H1 (cell line): ENCODE measurements at regions of chr7 and their contacts with region 1.

Region 1: GRCh38 chr7:38318803-38319416 is 45.5 kb upstream of the TARP start:
- DNase-seq: peak in 1 of 2 experiments; percentile 83
- H3K4me3 ChIP-seq: no peak overlapping the region
- H3K27ac ChIP-seq: no peak overlapping the region
- H3K4me1 ChIP-seq: peaks cover 0 to 4% (median under 1%) of the 10 kb centered on the region in 4 experiments; a peak in 2 of 7 replicates
- H3K27me3 ChIP-seq: no peaks in the 10 kb centered on the region
- CTCF ChIP-seq: peak; percentile 30 to 81 (median 72)
- EP300 ChIP-seq: 0 out of 3 replicates have a peak, but pooled peaks of 1 of the 2 experiments have one; percentile 38
- POLR2A ChIP-seq: no peak
- RAD21 ChIP-seq: peak; percentile 83 to 86

Region 2: DNA sequence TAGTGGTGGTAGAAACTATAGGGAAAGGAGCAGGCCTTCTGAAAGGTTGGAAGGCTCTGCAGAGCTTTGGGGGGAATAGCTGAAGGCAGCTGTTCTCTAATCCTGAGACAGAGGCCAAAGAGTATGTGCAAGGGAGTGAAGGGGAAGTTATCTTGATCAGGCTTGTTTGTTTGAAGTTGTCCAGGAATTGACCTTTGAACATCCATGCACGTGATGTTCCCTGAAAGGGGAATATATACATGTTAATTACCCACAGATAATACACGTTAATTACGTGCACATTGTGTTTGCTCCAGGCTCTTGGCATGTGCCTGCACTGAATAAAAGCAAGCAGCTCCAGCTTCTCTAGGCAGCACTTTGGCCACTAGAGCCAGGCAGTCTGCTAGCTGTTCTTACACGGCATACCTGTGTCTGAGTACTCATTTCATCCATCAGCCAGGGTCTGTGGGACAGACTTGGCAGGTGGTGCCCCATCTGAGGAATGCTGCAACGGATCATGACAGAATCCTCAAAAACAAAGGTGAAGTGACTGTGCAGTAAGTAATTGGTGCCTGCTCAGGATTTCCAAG is 158.8 kb before region 1 on chr7:
- CTCF ChIA-PET with region 1: no interaction called
- POLR2A ChIA-PET with region 1: no interaction called
- DNase-seq: no peak
- H3K4me3 ChIP-seq: no peak overlapping the region
- H3K27ac ChIP-seq: no peak overlapping the region
- H3K4me1 ChIP-seq: no peaks in the 10 kb centered on the region
- H3K27me3 ChIP-seq: no peaks in the 10 kb centered on the region
- CTCF ChIP-seq: no peak
- EP300 ChIP-seq: no peak
- POLR2A ChIP-seq: no peak
- RAD21 ChIP-seq: no peak

Region 3: GRCh38 chr7:38178004-38178694 is 140.8 kb before region 1 on chr7 and contains the start of gene STARD3NL:
- CTCF ChIA-PET with region 1: no interaction called
- POLR2A ChIA-PET with region 1: no interaction called
- DNase-seq: peak; percentile 90 to 99
- H3K4me3 ChIP-seq: peak within 1 kb of the TSS; percentile 73 to 94 (median 83)
- H3K27ac ChIP-seq: peak within 1 kb of the TSS; percentile 75
- H3K4me1 ChIP-seq: no peaks in the 10 kb centered on the region; a peak in 1 of 7 replicates
- H3K27me3 ChIP-seq: no peaks in the 10 kb centered on the region
- CTCF ChIP-seq: no peak
- EP300 ChIP-seq: no peak
- POLR2A ChIP-seq: peak; percentile 82 to 85; a peak in 2 of 3 replicates
- RAD21 ChIP-seq: no peak; a peak in 1 of 4 replicates
- total RNA-seq, gene STARD3NL: 33.1 and 40.5 TPM in 2 replicates

Region 4: GRCh38 chr7:38222481-38223096 is 96.3 kb before region 1 on chr7:
- CTCF ChIA-PET with region 1: interaction called, 68 read pairs
- POLR2A ChIA-PET with region 1: no interaction called
- DNase-seq: no peak
- H3K4me3 ChIP-seq: no peak overlapping the region
- H3K27ac ChIP-seq: no peak overlapping the region
- H3K4me1 ChIP-seq: no peaks in the 10 kb centered on the region
- H3K27me3 ChIP-seq: no peaks in the 10 kb centered on the region
- CTCF ChIP-seq: peak in 2 of 3 experiments; percentile 77 to 80; a peak in 3 of 4 replicates
- EP300 ChIP-seq: no peak
- POLR2A ChIP-seq: no peak
- RAD21 ChIP-seq: peak; percentile 87 to 88

Region 5: GRCh38 chr7:38274486-38274885 is 44.4 kb before region 1 on chr7:
- CTCF ChIA-PET with region 1: interaction called, 10 read pairs
- POLR2A ChIA-PET with region 1: no interaction called
- DNase-seq: no peak
- H3K4me3 ChIP-seq: no peak overlapping the region
- H3K27ac ChIP-seq: no peak overlapping the region
- H3K4me1 ChIP-seq: peaks cover 0 to 3% (median under 1%) of the 10 kb centered on the region in 4 experiments; a peak in 2 of 7 replicates
- H3K27me3 ChIP-seq: no peaks in the 10 kb centered on the region
- CTCF ChIP-seq: no peak
- EP300 ChIP-seq: no peak
- POLR2A ChIP-seq: no peak
- RAD21 ChIP-seq: no peak

Region 6: GRCh38 chr7:38300175-38300574 is 18.7 kb before region 1 on chr7:
- CTCF ChIA-PET with region 1: interaction called, 20 read pairs
- POLR2A ChIA-PET with region 1: interaction called, 5 read pairs
- DNase-seq: no peak
- H3K4me3 ChIP-seq: no peak overlapping the region
- H3K27ac ChIP-seq: no peak overlapping the region
- H3K4me1 ChIP-seq: peaks cover 0 to 5% (median 0%) of the 10 kb centered on the region in 4 experiments; a peak in 1 of 7 replicates
- H3K27me3 ChIP-seq: no peaks in the 10 kb centered on the region
- CTCF ChIP-seq: peak; percentile 6 to 15 (median 9); a peak in 2 of 4 replicates
- EP300 ChIP-seq: no peak
- POLR2A ChIP-seq: no peak
- RAD21 ChIP-seq: no peak

Region 7: DNA sequence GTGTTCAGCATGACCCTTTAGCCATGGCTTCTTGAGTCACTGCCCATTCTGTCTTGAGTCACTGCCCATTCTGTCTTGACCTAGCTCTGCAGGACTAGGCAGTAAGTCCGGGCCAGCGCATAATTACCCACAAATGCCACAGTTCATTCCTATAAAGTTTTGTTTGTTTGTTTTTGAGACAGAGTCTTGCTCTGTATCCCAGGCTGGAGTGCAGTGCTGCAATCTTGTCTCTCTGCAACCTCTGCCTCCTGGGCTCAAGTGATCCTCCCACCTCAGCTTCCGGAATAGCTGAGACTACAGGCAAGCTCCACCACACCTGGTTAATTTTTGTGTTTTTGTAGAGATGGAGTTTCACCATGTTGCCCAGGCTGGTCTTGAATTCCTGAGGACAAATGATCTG is 12.7 kb before region 1 on chr7:
- CTCF ChIA-PET with region 1: interaction called, 27 read pairs
- POLR2A ChIA-PET with region 1: interaction called, 5 read pairs
- DNase-seq: no peak
- H3K4me3 ChIP-seq: no peak overlapping the region
- H3K27ac ChIP-seq: no peak overlapping the region
- H3K4me1 ChIP-seq: peaks cover 0 to 5% (median 0%) of the 10 kb centered on the region in 4 experiments; a peak in 1 of 7 replicates
- H3K27me3 ChIP-seq: no peaks in the 10 kb centered on the region
- CTCF ChIP-seq: no peak
- EP300 ChIP-seq: no peak
- POLR2A ChIP-seq: no peak
- RAD21 ChIP-seq: no peak

Region 8: DNA sequence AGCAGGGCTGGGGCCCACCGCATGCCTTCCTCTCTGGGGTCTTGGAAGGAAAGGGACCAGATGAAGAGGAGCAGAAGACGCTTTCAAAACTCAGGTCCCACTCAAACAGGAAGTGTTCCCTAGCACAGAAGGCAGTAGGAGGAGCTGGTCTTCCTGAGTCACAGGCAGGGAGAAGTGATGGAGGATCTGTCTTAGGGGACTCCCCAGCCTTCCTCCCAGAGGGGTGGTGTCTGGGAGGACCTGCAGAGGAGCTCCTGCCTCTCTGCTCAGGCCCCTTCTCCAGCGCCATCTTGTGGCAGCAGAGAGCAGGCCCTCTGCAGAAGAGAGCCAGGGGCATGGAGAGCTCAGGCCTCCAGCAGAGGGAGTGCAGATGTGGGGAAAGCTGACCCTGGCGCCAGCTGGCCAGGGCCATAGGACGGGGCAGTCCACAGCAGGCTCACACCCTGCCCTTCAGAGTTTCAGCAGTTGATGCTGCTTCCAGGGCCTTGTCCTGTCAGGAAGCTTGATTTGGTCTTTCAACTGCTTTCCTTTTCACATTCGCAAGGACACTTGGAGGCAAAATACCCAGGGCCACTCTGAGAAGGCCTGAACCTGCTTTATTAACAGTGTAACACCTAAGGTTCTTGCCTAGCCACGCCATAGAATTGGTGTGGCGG is 16.7 kb after region 1 on chr7:
- CTCF ChIA-PET with region 1: interaction called, 76 read pairs
- POLR2A ChIA-PET with region 1: interaction called, 3 read pairs
- DNase-seq: peak; percentile 83 to 91
- H3K4me3 ChIP-seq: no peak overlapping the region
- H3K27ac ChIP-seq: no peak overlapping the region
- H3K4me1 ChIP-seq: peaks cover 0 to 12% (median 7%) of the 10 kb centered on the region in 4 experiments; a peak in 5 of 7 replicates
- H3K27me3 ChIP-seq: no peaks in the 10 kb centered on the region
- CTCF ChIP-seq: peak; percentile 96 to 100 (median 99)
- EP300 ChIP-seq: peak in 1 of 2 experiments; percentile 43; a peak in 1 of 3 replicates
- POLR2A ChIP-seq: peak in 1 of 2 experiments; percentile 34; a peak in 1 of 3 replicates
- RAD21 ChIP-seq: peak; percentile 69 to 83